ENCODE measurements at regions of chr1 and their contacts with region 1.

Region 1: GRCh38 chr1:93345633-93346420 is at the start of gene DR1:
- DNase-seq: peak; percentile 92
- ATAC-seq: peak; percentile 77
- H3K4me3 Mint-ChIP-seq: peak within 1 kb of the TSS; percentile 100
- H3K27ac Mint-ChIP-seq: peak within 1 kb of the TSS; percentile 99
- H3K4me1 Mint-ChIP-seq: peaks cover 49% of the 10 kb centered on the region
- H3K27me3 Mint-ChIP-seq: no peaks in the 10 kb centered on the region
- CTCF ChIP-seq: no peak
- total RNA-seq, gene DR1: 62.3 and 62.9 TPM in 2 replicates

Region 2: DNA sequence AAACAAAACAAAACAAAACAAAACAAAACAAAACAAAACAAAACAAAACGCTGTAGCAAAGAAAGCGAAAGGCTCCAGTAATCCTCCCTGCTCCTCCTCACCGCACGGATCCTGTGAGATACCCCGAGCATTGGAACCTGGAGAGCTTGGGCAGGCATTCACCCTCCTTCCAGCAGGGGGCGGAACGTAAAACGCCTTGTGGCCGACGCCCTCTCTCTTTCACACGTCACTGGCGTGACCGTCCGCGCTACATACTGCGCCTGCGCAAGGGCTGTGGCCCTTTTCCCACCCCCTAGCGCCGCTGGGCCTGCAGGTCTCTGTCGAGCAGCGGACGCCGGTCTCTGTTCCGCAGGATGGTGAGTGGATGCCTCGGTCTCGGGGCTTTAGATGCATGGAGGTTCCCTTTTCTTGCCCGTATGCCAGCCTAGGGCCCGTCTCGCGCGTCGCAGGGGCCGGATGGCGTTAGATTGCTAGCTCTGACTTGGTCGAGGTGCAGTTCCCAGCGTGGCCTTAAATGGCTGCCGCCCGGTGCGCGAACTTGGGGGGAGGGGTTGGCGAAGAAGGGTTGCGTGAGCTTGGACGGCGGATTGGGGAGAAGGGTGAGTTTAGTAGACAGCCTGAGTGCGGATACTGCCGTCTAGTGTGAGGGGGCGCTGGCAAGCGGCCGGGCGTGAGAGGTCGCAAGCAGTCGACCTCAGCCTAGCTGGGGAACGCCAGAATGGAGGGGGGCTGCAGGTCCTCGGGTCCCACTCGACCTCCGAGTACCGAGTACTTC is 513.9 kb before region 1 on chr1 and contains the start of gene RPL5:
- CTCF ChIA-PET with region 1: no interaction called
- POLR2A ChIA-PET with region 1: interaction called, 17 read pairs
- intact Hi-C with region 1: loop called (anchors 5 kb)
- DNase-seq: peak; percentile 98
- ATAC-seq: peak; percentile 90
- H3K4me3 Mint-ChIP-seq: peak within 1 kb of the TSS; percentile 99
- H3K27ac Mint-ChIP-seq: peak within 1 kb of the TSS; percentile 97
- H3K4me1 Mint-ChIP-seq: peaks cover 48% of the 10 kb centered on the region
- H3K27me3 Mint-ChIP-seq: no peaks in the 10 kb centered on the region
- CTCF ChIP-seq: no peak
- total RNA-seq, gene RPL5: 1,685 and 1,766 TPM in 2 replicates

Region 3: DNA sequence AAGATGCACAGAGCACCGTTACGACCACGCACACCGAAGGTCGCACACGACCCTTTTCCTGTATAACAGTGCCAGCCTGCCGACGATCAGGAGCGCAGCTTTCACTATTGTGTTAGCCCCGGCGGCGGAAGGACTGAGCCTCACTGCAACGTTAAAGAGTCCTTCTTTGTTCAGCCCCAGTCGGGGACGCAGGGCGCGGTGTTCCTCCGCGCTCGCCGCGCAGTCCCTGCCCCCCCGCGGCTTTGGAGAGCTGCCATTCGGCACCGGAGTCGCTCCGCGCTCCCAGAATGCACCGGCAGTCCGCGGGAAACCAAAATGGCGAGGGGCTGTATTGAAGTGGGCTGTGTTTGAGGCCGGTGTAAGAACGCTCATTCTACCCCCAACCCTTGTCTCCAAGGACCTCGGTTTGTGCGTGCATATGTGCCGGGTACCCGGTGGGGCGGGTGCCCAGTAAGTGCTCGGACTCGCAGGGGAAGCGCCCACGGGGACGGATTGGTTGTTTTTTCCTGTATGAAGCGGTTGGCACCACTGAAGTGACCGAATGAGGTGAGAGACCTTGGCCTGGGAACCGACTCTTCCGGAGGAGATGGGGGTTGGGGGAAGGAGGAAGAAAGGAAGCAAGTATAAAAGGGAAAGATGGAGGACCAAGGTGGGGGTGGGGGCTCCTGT is 266.7 kb before region 1 on chr1 and contains the start of gene MTF2:
- CTCF ChIA-PET with region 1: interaction called, 4 read pairs
- POLR2A ChIA-PET with region 1: interaction called, 41 read pairs
- intact Hi-C with region 1: loop called (anchors 1 kb)
- DNase-seq: peak; percentile 89
- ATAC-seq: peak; percentile 90
- H3K4me3 Mint-ChIP-seq: peak within 1 kb of the TSS; percentile 96
- H3K27ac Mint-ChIP-seq: peak within 1 kb of the TSS; percentile 97
- H3K4me1 Mint-ChIP-seq: peaks cover 54% of the 10 kb centered on the region
- H3K27me3 Mint-ChIP-seq: no peaks in the 10 kb centered on the region
- CTCF ChIP-seq: no peak
- total RNA-seq, gene MTF2: 49.1 and 59.7 TPM in 2 replicates

Region 4: GRCh38 chr1:93358293-93358692 is 12.5 kb after region 1 on chr1:
- CTCF ChIA-PET with region 1: no interaction called
- POLR2A ChIA-PET with region 1: interaction called, 10 read pairs
- intact Hi-C with region 1: loop called (anchors 1 kb)
- DNase-seq: no peak
- ATAC-seq: no peak
- H3K4me3 Mint-ChIP-seq: no peak overlapping the region
- H3K27ac Mint-ChIP-seq: no peak overlapping the region
- H3K4me1 Mint-ChIP-seq: peaks cover 36% of the 10 kb centered on the region
- H3K27me3 Mint-ChIP-seq: no peaks in the 10 kb centered on the region
- CTCF ChIP-seq: no peak

Region 5: DNA sequence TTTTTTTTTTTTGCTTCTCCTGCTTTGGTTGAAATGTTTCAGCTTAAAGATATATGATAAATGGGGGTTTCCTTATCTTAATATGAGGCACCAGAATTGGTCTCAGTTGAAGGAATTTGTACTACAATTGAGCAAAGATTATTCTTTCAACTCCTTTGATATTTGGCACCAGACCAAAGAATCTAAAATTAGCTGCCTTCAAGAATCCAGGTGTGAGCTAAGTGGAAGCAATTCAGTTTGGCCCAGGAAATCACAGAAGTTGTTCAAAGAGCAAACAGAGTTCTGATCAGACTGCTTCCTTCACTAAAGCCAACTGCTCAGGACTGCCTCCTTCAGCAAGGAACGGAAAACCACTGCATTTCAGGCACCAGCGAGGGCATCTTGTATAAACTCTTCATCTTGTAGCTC is 404.1 kb after region 1 on chr1:
- CTCF ChIA-PET with region 1: no interaction called
- POLR2A ChIA-PET with region 1: no interaction called
- intact Hi-C with region 1: loop called (anchors 5 kb)
- DNase-seq: no peak
- ATAC-seq: peak; percentile 62
- H3K4me3 Mint-ChIP-seq: peak overlapping the region; percentile 76
- H3K27ac Mint-ChIP-seq: peak overlapping the region; percentile 94
- H3K4me1 Mint-ChIP-seq: peaks cover 60% of the 10 kb centered on the region
- H3K27me3 Mint-ChIP-seq: no peaks in the 10 kb centered on the region
- CTCF ChIP-seq: no peak

Region 6: GRCh38 chr1:94417978-94418663 is 1072.3 kb after region 1 on chr1 and contains the start of gene ABCD3:
- CTCF ChIA-PET with region 1: no interaction called
- POLR2A ChIA-PET with region 1: no interaction called
- intact Hi-C with region 1: loop called (anchors 5 kb)
- DNase-seq: peak; percentile 97
- ATAC-seq: peak; percentile 95
- H3K4me3 Mint-ChIP-seq: no peak within 1 kb of the TSS
- H3K27ac Mint-ChIP-seq: no peak within 1 kb of the TSS
- H3K4me1 Mint-ChIP-seq: peaks cover 17% of the 10 kb centered on the region
- H3K27me3 Mint-ChIP-seq: no peaks in the 10 kb centered on the region
- CTCF ChIP-seq: no peak
- total RNA-seq, gene ABCD3: 20.8 and 23.2 TPM in 2 replicates

Measured in activated B cell treated with CpG ODN at 0.5 μM for 24 hours (primary cell).